CD8-positive, alpha-beta memory T cell (primary cell): ENCODE measurements at regions of chr6 and their contacts with region 1.

Region 1: DNA sequence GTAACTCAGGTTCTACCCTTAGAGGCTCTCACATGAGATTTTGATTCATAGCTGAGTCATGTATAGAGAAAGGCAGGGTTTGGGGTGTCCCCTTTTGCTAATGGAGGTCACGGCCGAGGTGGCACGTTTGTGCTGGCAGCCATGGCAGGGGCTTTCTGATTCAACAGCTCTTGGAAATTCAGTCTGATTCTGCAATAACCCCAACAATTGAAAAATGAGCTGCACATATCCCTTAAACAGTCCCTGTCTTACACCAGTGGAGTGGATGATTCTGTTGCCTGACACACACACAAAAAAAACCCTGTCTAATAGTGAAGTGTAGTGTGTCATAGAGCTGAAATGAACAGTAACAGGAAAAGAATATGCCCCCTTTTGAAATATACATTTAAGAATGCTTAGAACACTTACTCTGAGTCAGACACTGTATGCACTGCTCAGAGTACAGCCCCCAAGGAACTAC is 40.4 kb upstream of the ARG1 start:
- DNase-seq: no peak
- H3K4me3 ChIP-seq: no peak overlapping the region
- H3K4me3 Mint-ChIP-seq: peak overlapping the region in 1 of 7 donors; percentile 10
- H3K27ac ChIP-seq: no peak overlapping the region
- H3K27ac Mint-ChIP-seq: peak overlapping the region in 2 of 8 donors; percentile 40 to 89
- H3K4me1 ChIP-seq: peaks cover 23% of the 10 kb centered on the region
- H3K4me1 Mint-ChIP-seq: peaks cover 34 to 38% (median 37%) of the 10 kb centered on the region in 3 donors
- H3K27me3 ChIP-seq: no peaks in the 10 kb centered on the region
- H3K27me3 Mint-ChIP-seq: peaks cover 5 to 7% of the 10 kb centered on the region in 2 donors

Region 2: GRCh38 chr6:130885392-130886192 is 647.0 kb before region 1 on chr6:
- CTCF ChIA-PET with region 1: interaction called, 39 read pairs
- POLR2A ChIA-PET with region 1: no interaction called
- DNase-seq: peak; percentile 32 to 77 (median 62)
- H3K4me3 ChIP-seq: no peak overlapping the region
- H3K4me3 Mint-ChIP-seq: no peak overlapping the region
- H3K27ac ChIP-seq: no peak overlapping the region
- H3K27ac Mint-ChIP-seq: no peak overlapping the region
- H3K4me1 ChIP-seq: no peaks in the 10 kb centered on the region
- H3K4me1 Mint-ChIP-seq: no peaks in the 10 kb centered on the region
- H3K27me3 ChIP-seq: no peaks in the 10 kb centered on the region
- H3K27me3 Mint-ChIP-seq: no peaks in the 10 kb centered on the region

Region 3: GRCh38 chr6:131182991-131183425 is 349.6 kb before region 1 on chr6:
- CTCF ChIA-PET with region 1: interaction called, 88 read pairs
- POLR2A ChIA-PET with region 1: interaction called, 5 read pairs
- DNase-seq: peak in 3 of 5 donors; percentile 41 to 56 (median 47)
- H3K4me3 ChIP-seq: no peak overlapping the region
- H3K4me3 Mint-ChIP-seq: peak overlapping the region in 6 of 7 donors; percentile 38 to 91 (median 64)
- H3K27ac ChIP-seq: no peak overlapping the region
- H3K27ac Mint-ChIP-seq: peak overlapping the region in 7 of 8 donors; percentile 71 to 96 (median 90)
- H3K4me1 ChIP-seq: peaks cover 7% of the 10 kb centered on the region
- H3K4me1 Mint-ChIP-seq: peaks cover 7 to 12% (median 10%) of the 10 kb centered on the region in 3 donors
- H3K27me3 ChIP-seq: no peaks in the 10 kb centered on the region
- H3K27me3 Mint-ChIP-seq: no peaks in the 10 kb centered on the region

Region 4: DNA sequence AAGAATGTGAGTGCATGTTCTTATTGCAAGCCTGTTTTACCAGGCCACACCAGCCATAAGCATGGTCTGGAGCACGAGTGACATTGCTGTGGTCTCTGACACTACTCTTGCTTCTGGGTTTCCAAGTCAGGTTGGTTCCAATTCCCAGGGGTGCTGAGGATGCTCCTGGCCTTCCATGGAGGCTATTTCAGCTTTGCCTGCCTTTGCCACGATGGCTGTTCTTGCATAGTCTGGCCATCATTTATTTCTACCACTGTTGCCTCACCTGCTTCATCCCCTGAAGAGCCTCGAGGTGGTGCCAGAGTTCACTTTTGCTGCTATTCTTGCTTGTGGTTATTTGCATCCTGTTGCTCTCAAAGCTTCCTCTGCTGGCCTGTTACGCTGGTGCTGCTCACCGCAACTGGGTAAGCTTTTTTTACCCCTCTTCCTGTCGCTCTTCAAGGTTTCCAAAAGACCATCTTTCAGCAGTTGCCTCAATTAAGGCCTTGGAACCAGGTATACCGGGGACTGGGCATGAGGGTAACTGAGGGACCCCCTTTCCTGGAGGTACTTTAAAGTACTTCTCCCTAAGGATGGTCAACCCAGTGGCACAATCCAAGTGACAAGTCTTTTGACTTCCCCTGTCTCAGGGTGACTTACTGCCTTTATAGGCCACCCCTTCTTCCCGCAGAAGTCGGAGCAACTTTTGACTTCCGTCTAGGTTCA is 332.9 kb before region 1 on chr6:
- CTCF ChIA-PET with region 1: interaction called, 34 read pairs
- POLR2A ChIA-PET with region 1: interaction called, 3 read pairs
- DNase-seq: peak; percentile 42 to 88 (median 84)
- H3K4me3 ChIP-seq: peak overlapping the region; percentile 37
- H3K4me3 Mint-ChIP-seq: peak overlapping the region; percentile 83 to 89 (median 86)
- H3K27ac ChIP-seq: peak overlapping the region; percentile 66
- H3K27ac Mint-ChIP-seq: peak overlapping the region; percentile 89 to 99 (median 96)
- H3K4me1 ChIP-seq: peaks cover 60% of the 10 kb centered on the region
- H3K4me1 Mint-ChIP-seq: peaks cover 59 to 64% (median 61%) of the 10 kb centered on the region in 3 donors
- H3K27me3 ChIP-seq: no peaks in the 10 kb centered on the region
- H3K27me3 Mint-ChIP-seq: no peaks in the 10 kb centered on the region

Region 5: DNA sequence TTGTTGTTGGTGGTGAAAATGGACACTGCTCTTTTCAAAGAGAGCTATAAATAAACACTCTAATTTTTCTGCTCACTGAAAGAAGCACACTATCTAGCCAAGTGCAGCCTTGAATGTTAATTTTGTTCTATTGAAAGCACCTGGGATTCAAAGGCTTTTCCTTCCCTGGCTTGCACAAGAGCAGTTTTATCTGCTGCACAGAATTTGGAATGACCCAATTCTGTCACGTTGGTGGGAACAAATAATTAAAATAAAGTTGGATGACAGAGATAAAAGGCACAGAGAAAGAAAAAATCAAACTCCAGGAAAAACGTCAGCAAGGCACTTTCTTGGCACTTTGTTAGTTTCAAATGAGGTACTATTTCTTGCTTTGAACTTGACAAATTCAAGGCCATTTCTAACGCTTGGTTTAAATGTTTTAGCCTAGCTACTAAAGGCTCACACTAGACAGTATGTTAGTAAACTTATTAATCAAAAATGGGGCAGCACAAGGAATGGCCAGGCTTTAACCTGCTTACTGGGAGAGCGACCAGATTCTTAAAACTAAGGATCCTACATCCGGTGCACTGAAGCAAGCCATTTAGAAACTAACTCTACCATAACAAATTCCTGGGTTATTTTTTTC is 105.1 kb before region 1 on chr6:
- CTCF ChIA-PET with region 1: no interaction called
- POLR2A ChIA-PET with region 1: no interaction called
- DNase-seq: no peak
- H3K4me3 ChIP-seq: no peak overlapping the region
- H3K4me3 Mint-ChIP-seq: no peak overlapping the region
- H3K27ac ChIP-seq: no peak overlapping the region
- H3K27ac Mint-ChIP-seq: no peak overlapping the region
- H3K4me1 ChIP-seq: peaks cover 6% of the 10 kb centered on the region
- H3K4me1 Mint-ChIP-seq: peaks cover 2 to 15% (median 14%) of the 10 kb centered on the region in 3 donors
- H3K27me3 ChIP-seq: no peaks in the 10 kb centered on the region
- H3K27me3 Mint-ChIP-seq: no peaks in the 10 kb centered on the region

Region 6: GRCh38 chr6:131519670-131520436 is 12.8 kb before region 1 on chr6:
- CTCF ChIA-PET with region 1: interaction called, 20 read pairs
- POLR2A ChIA-PET with region 1: no interaction called
- DNase-seq: peak in 3 of 5 donors; percentile 10 to 55 (median 27)
- H3K4me3 ChIP-seq: no peak overlapping the region
- H3K4me3 Mint-ChIP-seq: no peak overlapping the region
- H3K27ac ChIP-seq: no peak overlapping the region
- H3K27ac Mint-ChIP-seq: peak overlapping the region in 1 of 8 donors; percentile 3
- H3K4me1 ChIP-seq: peaks cover 12% of the 10 kb centered on the region
- H3K4me1 Mint-ChIP-seq: peaks cover 12 to 25% (median 18%) of the 10 kb centered on the region in 3 donors
- H3K27me3 ChIP-seq: no peaks in the 10 kb centered on the region
- H3K27me3 Mint-ChIP-seq: peaks cover 1 to 4% of the 10 kb centered on the region in 2 donors